T-cell (primary cell): ENCODE measurements at regions of chr10 and their contacts with region 1.

Region 1: GRCh38 chr10:34637418-34637911 is 177.6 kb downstream of the PARD3 start:
- DNase-seq: peak in 34 of 35 experiments; percentile 9 to 71 (median 52)
- ATAC-seq: peak in 3 of 4 experiments; percentile 35 to 70 (median 59)
- H3K4me3 ChIP-seq: no peak overlapping the region
- H3K4me3 Mint-ChIP-seq: no peak overlapping the region
- H3K27ac ChIP-seq: no peak overlapping the region
- H3K27ac Mint-ChIP-seq: no peak overlapping the region
- H3K4me1 ChIP-seq: no peaks in the 10 kb centered on the region
- H3K4me1 Mint-ChIP-seq: peaks cover 11 to 17% (median 15%) of the 10 kb centered on the region in 3 donors
- H3K27me3 ChIP-seq: peaks cover 0 to 4% of the 10 kb centered on the region in 2 experiments
- H3K27me3 Mint-ChIP-seq: peaks cover 2 to 6% of the 10 kb centered on the region in 2 donors

Region 2: DNA sequence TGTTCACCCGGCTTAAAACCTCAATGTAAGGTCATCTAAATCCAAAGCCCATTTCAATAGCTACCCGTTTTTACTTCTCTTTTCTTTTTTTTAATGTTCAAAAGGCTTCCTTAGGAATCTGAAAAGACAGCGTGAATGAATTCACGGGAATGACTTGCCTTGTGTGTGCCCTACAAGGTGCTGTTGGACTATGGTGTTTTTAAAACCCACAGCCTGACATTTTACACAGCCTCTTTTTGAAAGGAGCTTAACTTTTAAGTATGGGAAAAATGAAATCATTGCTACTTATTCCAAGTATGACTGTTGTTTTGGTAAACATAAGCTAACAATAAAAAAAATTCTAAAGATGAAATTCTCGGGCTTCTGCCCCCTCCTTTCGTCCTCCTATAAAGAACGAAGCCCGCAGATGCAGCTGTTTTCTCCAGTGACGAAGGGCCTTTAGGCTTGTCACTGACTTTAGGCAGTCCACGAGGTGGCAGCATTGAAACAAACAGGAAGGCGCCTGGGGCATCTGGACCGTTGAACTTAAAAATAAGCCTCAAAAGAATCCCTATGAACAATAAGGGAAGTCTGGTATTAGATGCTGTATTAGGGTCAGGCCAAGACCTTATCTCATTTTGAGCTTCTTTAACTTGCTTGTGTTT is 1444.3 kb before region 1 on chr10:
- CTCF ChIA-PET with region 1: interaction called, 7 to 17 read pairs
- POLR2A ChIA-PET with region 1: no interaction called
- DNase-seq: peak; percentile 41 to 80 (median 66)
- ATAC-seq: peak; percentile 67 to 91 (median 87)
- H3K4me3 ChIP-seq: no peak overlapping the region
- H3K4me3 Mint-ChIP-seq: no peak overlapping the region
- H3K27ac ChIP-seq: no peak overlapping the region
- H3K27ac Mint-ChIP-seq: no peak overlapping the region
- H3K4me1 ChIP-seq: no peaks in the 10 kb centered on the region
- H3K4me1 Mint-ChIP-seq: peaks cover 0 to 8% (median 0%) of the 10 kb centered on the region in 3 donors
- H3K27me3 ChIP-seq: no peaks in the 10 kb centered on the region
- H3K27me3 Mint-ChIP-seq: peaks cover 0 to 14% of the 10 kb centered on the region in 2 donors

Region 3: DNA sequence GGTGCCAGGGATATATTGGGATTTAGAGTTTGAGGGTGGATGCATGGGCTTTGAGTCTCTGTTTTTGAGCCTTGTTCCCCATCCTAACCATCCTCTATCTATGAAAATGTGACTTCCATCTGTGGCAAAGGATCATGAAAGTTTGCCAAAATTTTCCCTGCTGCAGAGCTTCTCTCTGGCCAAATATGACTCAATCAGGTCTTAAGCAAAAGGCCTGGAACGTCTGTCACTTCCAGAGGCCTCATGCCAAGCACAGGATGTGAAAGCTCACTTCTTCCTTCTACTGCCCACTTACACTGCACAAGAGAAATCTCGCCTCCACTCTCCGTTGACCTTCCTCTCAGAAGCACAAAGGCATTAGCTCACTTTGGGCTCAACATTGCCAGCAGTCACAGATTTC is 606.1 kb before region 1 on chr10:
- CTCF ChIA-PET with region 1: no interaction called
- POLR2A ChIA-PET with region 1: no interaction called
- DNase-seq: no peak
- ATAC-seq: no peak
- H3K4me3 ChIP-seq: no peak overlapping the region
- H3K4me3 Mint-ChIP-seq: no peak overlapping the region
- H3K27ac ChIP-seq: no peak overlapping the region
- H3K27ac Mint-ChIP-seq: no peak overlapping the region
- H3K4me1 ChIP-seq: no peaks in the 10 kb centered on the region
- H3K4me1 Mint-ChIP-seq: no peaks in the 10 kb centered on the region
- H3K27me3 ChIP-seq: no peaks in the 10 kb centered on the region
- H3K27me3 Mint-ChIP-seq: no peaks in the 10 kb centered on the region

Region 4: DNA sequence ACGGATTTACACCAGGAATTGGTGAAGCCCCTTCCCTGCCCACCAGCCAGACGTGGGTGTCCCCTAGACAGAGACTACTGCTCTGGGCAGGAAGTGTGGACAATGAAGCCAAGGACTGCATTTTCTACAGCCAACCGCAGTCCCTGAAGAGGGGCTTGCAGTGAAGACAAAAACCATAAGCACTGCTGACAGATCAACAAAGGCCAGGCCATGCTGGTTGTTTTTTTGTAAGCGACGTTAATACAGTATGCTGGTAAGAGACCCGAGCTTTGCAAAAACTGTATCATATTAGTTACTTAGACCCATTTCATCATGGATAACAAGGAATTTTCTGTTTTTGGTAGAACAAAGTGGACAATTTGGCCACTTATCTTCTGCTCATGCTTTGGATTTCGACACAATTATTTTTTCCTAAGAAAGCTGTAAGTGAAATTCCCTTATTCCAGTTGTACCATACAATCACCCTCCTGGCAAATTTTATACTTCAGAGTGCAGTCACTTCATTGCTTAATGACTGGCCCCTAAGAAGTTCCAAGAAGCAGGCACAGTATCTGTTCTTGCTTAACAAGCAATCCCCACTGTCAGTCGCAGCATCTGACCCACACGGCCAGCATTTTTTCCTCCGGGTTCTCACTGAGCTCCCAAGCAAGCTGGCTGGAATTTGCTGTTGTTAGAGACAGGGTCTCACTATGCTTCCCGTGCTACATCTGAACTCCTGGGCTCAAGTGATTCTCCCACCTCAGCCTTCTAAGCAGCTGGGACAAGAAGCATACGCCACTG is 14.1 kb after region 1 on chr10:
- CTCF ChIA-PET with region 1: interaction called, 4 to 12 read pairs
- POLR2A ChIA-PET with region 1: no interaction called
- DNase-seq: no peak
- ATAC-seq: no peak
- H3K4me3 ChIP-seq: no peak overlapping the region
- H3K4me3 Mint-ChIP-seq: no peak overlapping the region
- H3K27ac ChIP-seq: no peak overlapping the region
- H3K27ac Mint-ChIP-seq: no peak overlapping the region
- H3K4me1 ChIP-seq: no peaks in the 10 kb centered on the region
- H3K4me1 Mint-ChIP-seq: peaks cover 0 to 3% (median 0%) of the 10 kb centered on the region in 3 donors
- H3K27me3 ChIP-seq: peaks cover 0 to 3% of the 10 kb centered on the region in 2 experiments
- H3K27me3 Mint-ChIP-seq: peaks cover 8 to 14% of the 10 kb centered on the region in 2 donors